ENCODE measurements at regions of chr5 and their contacts with region 1.

Region 1: GRCh38 chr5:115657881-115658233 is 32.0 kb upstream of the TMED7 start:
- DNase-seq: no peak
- ATAC-seq: no peak

Region 2: DNA sequence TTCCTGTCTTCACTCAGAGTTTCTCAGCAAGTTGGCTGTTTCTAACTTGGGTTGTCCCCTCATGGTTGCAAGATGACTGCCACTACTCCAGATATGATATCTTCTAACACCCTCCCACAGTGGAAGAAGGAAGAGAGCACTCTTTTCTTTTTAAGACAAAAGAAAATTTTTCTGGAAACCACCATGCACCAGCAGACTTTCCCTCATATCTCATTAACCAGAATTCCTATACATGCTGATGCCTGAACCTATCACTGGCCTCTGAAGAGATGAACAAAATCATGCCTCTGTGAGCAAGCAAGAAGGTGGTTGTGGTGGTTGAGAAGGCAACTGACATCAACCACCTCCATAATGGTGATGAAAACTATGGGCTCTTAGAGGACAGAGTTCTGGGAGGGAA is 170.1 kb before region 1 on chr5:
- intact Hi-C with region 1: no loop called
- DNase-seq: no peak
- ATAC-seq: no peak

Region 3: GRCh38 chr5:115738807-115739206 is 81.0 kb after region 1 on chr5:
- intact Hi-C with region 1: no loop called
- DNase-seq: no peak
- ATAC-seq: no peak

Region 4: GRCh38 chr5:115816226-115817081 is 158.6 kb after region 1 on chr5 and contains the start of gene CDO1:
- intact Hi-C with region 1: loop called in 1 of 2 experiments (anchors 10 kb)
- DNase-seq: peak; percentile 68
- ATAC-seq: peak; percentile 86 to 88
- total RNA-seq, gene CDO1: 12.9 to 41.4 TPM

Region 5: GRCh38 chr5:116045821-116046220 is 388.0 kb after region 1 on chr5:
- intact Hi-C with region 1: loop called in 1 of 2 experiments (anchors 10 kb)
- DNase-seq: no peak
- ATAC-seq: no peak

Region 6: DNA sequence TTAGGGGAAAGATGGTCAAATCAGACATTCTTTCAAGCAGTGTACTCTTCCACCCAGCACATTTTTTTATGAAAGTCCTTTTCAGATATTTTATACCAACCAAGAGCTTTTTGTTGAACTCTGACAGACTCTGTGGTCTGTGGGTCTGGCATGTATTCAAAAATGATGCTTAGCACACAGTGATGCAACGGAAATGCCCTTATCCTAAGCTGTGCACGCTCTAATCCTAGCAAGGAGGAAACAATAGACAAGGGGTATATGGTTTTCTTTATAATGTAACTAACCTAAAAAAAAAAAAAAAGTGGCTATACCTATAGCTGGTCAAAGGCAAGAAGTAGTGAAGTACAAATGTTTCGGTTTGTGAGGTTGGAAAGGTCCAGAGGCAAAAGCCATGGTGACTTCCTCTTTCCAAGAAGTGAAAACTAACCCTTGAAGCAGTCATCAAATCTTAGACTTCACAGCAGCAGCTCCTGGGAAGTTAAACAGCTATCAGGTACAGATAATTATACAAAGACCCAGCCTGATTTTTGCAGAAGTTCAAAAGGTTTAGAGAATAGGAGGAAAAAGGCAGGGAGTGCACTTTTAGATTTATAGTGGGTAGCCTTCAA is 834.3 kb after region 1 on chr5:
- intact Hi-C with region 1: no loop called
- DNase-seq: no peak
- ATAC-seq: peak; percentile 85 to 88